SK-N-SH (cell line): ENCODE measurements at regions of chr17 and their contacts with region 1.

Region 1: GRCh38 chr17:50853015-50853615 is 13.0 kb downstream of the TOB1 start:
- DNase-seq: no peak
- H3K4me3 ChIP-seq: no peak overlapping the region
- H3K27ac ChIP-seq: no peak overlapping the region
- H3K4me1 ChIP-seq: peaks cover 0 to 9% of the 10 kb centered on the region in 2 experiments; a peak in 1 of 4 replicates
- H3K27me3 ChIP-seq: no peaks in the 10 kb centered on the region
- CTCF ChIP-seq: no peak
- EP300 ChIP-seq: no peak
- RAD21 ChIP-seq: no peak

Region 2: DNA sequence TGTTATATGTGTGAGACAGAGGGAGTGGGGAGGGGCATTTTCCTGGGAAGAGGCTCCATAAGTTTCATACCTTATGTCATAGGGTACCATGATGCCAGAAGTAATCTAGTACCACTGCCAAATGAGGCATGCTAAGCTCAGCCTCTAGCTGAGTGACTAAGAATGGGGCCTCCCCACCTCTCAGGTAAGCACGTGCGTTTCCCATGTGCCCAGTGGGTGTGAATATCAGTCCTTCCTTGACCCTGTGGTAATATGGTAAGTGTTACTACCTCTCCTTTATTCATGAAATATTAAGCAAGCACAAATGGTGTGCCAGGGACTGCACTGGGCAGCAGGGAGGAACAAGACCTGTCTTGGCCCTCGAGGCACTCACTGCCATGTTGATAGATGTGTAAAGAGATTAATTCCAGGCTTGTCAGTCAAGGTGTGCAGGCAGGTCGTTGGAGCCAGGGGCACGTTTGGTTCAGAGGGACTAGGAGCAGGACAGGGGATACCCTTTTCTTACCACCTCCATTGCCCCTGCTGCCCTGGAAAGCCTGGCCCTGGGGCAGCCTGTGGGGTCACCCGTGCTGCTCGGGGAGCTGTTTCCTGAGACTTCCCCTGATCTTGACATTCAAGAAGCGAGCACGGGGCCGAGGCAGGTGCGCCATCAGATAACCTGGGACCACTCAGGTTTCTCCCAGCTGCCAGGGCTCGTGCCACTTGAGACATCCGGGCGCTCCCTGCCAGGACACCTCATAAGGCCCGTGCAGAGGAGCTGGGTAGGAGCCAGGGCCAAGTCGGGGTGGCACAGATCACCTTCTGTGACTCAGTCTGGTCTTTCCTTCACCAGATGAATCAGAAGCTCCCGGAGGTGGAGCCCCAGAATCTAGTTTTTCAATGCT is 365.7 kb before region 1 on chr17:
- CTCF ChIA-PET with region 1: no interaction called
- POLR2A ChIA-PET with region 1: no interaction called
- DNase-seq: no peak
- H3K4me3 ChIP-seq: no peak overlapping the region
- H3K27ac ChIP-seq: no peak overlapping the region
- H3K4me1 ChIP-seq: peaks cover 0 to 12% of the 10 kb centered on the region in 2 experiments; a peak in 3 of 4 replicates
- H3K27me3 ChIP-seq: no peaks in the 10 kb centered on the region
- CTCF ChIP-seq: no peak
- EP300 ChIP-seq: no peak
- RAD21 ChIP-seq: no peak

Region 3: DNA sequence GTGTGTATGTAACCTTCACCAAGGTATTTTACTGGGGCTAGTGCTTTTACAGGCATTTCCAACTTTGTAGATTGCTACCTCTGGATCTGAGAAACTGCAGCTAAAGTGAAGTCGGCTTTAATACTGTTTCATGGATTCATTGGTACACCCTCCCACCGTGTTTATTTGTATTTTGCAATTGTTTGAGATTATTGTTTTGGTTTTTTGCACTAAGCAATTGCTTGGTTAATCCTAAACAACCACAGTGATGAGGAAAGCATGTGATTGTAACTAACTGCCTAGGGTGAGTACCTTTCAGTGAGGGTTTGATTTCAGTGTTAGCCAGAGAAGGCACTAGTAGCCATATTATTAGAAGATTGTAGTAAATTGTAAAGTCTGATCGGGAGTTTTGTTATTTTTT is 130.4 kb before region 1 on chr17:
- CTCF ChIA-PET with region 1: no interaction called
- POLR2A ChIA-PET with region 1: no interaction called
- DNase-seq: no peak
- H3K4me3 ChIP-seq: peak overlapping the region in 1 of 2 experiments; percentile 2; a peak in 1 of 4 replicates
- H3K27ac ChIP-seq: no peak overlapping the region
- H3K4me1 ChIP-seq: peaks cover 8% of the 10 kb centered on the region in 2 experiments; a peak in 2 of 4 replicates
- H3K27me3 ChIP-seq: no peaks in the 10 kb centered on the region
- CTCF ChIP-seq: no peak
- EP300 ChIP-seq: no peak
- RAD21 ChIP-seq: no peak

Region 4: GRCh38 chr17:50816771-50817751 is 36.1 kb before region 1 on chr17:
- CTCF ChIA-PET with region 1: interaction called, 14 read pairs
- POLR2A ChIA-PET with region 1: no interaction called
- DNase-seq: peak; percentile 84
- H3K4me3 ChIP-seq: no peak overlapping the region; a peak in 1 of 4 replicates
- H3K27ac ChIP-seq: no peak overlapping the region
- H3K4me1 ChIP-seq: no peaks in the 10 kb centered on the region; a peak in 1 of 4 replicates
- H3K27me3 ChIP-seq: peaks cover 4% of the 10 kb centered on the region; the same call in 1 of the 2 replicates
- CTCF ChIP-seq: peak; percentile 82
- EP300 ChIP-seq: no peak
- RAD21 ChIP-seq: peak; percentile 44

Region 5: DNA sequence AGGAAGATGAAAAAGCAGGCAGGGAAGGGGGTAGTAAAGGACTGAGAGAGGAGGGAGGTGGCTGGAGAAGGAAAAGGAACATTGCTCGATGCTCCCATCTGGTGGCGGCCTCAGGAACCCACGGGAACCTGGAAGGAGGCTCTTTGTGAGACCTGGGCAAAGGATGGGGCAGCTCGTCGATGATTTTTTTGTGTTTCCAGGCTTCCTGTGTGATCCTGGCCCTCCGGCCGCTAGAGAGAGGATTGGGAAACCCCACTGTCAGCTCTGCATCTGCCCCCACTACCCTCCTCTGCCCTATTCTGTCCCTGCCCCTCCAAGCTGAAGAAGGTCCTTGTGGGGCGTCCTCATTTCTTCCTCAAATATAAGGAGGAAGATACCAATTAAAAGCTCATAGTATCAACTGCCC is 11.2 kb before region 1 on chr17:
- CTCF ChIA-PET with region 1: interaction called, 80 read pairs
- POLR2A ChIA-PET with region 1: interaction called, 4 read pairs
- DNase-seq: peak; percentile 97
- H3K4me3 ChIP-seq: no peak overlapping the region; a peak in 1 of 4 replicates
- H3K27ac ChIP-seq: no peak overlapping the region
- H3K4me1 ChIP-seq: peaks cover 3 to 5% of the 10 kb centered on the region in 2 experiments; a peak in 2 of 4 replicates
- H3K27me3 ChIP-seq: no peaks in the 10 kb centered on the region
- CTCF ChIP-seq: peak; percentile 94
- EP300 ChIP-seq: no peak
- RAD21 ChIP-seq: peak; percentile 93

Region 6: GRCh38 chr17:50904521-50905459 is 51.7 kb after region 1 on chr17:
- CTCF ChIA-PET with region 1: interaction called, 28 read pairs
- POLR2A ChIA-PET with region 1: interaction called, 3 read pairs
- DNase-seq: peak; percentile 90
- H3K4me3 ChIP-seq: no peak overlapping the region
- H3K27ac ChIP-seq: peak overlapping the region; percentile 61 to 92; a peak in 3 of 4 replicates
- H3K4me1 ChIP-seq: peaks cover 13 to 42% of the 10 kb centered on the region in 2 experiments
- H3K27me3 ChIP-seq: no peaks in the 10 kb centered on the region
- CTCF ChIP-seq: no peak; the same call in 1 of the 2 replicates
- EP300 ChIP-seq: peak in 1 of 2 experiments; percentile 54; a peak in 2 of 4 replicates
- RAD21 ChIP-seq: peak; percentile 77

Region 7: DNA sequence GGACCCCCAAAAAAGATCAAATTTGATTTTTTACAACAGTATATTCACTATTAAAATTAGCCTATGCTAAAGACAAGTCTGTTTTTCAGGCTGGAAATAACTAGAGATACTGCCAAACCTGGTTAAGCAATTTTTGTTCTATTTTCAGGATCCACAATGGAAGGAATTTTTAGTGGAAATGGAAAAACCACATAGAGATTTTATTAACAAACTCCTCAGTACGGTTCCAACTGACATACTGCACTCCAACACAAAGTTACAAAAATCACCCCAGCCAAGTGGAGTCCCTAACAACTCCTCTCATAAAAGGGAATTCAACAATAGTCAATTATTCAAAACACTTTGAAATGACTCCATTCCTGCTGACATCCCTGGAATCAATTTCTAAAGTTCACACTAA is 114.7 kb after region 1 on chr17:
- CTCF ChIA-PET with region 1: interaction called, 20 read pairs
- POLR2A ChIA-PET with region 1: no interaction called
- DNase-seq: no peak
- H3K4me3 ChIP-seq: no peak overlapping the region
- H3K27ac ChIP-seq: no peak overlapping the region
- H3K4me1 ChIP-seq: peaks cover 0 to 12% of the 10 kb centered on the region in 2 experiments; a peak in 2 of 4 replicates
- H3K27me3 ChIP-seq: no peaks in the 10 kb centered on the region
- CTCF ChIP-seq: no peak
- EP300 ChIP-seq: no peak
- RAD21 ChIP-seq: no peak

Region 8: GRCh38 chr17:51000835-51001638 is 147.9 kb after region 1 on chr17:
- CTCF ChIA-PET with region 1: interaction called, 36 read pairs
- POLR2A ChIA-PET with region 1: no interaction called
- DNase-seq: peak; percentile 63
- H3K4me3 ChIP-seq: no peak overlapping the region
- H3K27ac ChIP-seq: peak overlapping the region in 1 of 2 experiments; percentile 37; a peak in 2 of 4 replicates
- H3K4me1 ChIP-seq: no peaks in the 10 kb centered on the region
- H3K27me3 ChIP-seq: no peaks in the 10 kb centered on the region
- CTCF ChIP-seq: peak; percentile 89
- EP300 ChIP-seq: no peak
- RAD21 ChIP-seq: peak; percentile 96

Region 9: DNA sequence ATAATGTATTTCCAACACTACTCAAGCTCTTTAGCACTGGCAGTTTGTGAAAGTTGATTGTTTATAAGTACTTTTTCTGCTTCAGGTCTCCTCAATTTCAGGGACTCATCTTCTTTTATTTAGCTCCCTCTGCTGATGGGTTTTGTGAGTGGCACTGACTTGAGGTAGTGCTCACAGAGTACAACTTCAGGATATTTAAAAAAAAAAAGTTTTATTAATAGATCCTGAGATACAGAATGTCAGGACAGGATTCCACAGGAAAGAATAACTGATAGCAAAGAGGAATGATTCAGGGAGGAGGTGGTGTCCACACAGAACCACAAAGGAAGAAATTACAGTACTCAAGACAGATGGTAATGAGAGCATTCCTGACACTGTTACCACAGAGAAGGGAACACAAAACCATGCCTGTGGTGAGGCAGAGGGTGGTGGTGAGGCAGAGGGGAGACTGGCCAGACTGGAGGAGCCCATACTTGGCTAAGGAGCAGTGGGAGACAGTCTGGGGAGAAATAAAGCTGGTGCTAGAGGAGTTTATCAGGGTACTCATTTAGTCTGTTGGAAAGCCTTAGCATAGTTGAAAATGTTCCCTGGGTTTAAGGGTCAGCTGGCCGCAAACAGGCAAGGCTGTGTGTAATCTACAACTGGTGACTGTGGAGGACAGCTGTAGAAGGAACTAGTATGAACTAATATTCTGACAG is 203.8 kb after region 1 on chr17:
- CTCF ChIA-PET with region 1: interaction called, 50 read pairs
- POLR2A ChIA-PET with region 1: no interaction called
- DNase-seq: peak; percentile 49
- H3K4me3 ChIP-seq: peak overlapping the region in 1 of 2 experiments; percentile 5; a peak in 1 of 4 replicates
- H3K27ac ChIP-seq: peak overlapping the region; percentile 51 to 78
- H3K4me1 ChIP-seq: peaks cover 6 to 10% of the 10 kb centered on the region in 2 experiments; a peak in 3 of 4 replicates
- H3K27me3 ChIP-seq: no peaks in the 10 kb centered on the region
- CTCF ChIP-seq: peak; percentile 98
- EP300 ChIP-seq: 0 out of 4 replicates have a peak, but pooled peaks of 1 of the 2 experiments have one; percentile 6
- RAD21 ChIP-seq: peak; percentile 94